Ascending aorta (tissue), 2 donors: ENCODE measurements at regions of chr11 and their contacts with region 1.

Region 1: DNA sequence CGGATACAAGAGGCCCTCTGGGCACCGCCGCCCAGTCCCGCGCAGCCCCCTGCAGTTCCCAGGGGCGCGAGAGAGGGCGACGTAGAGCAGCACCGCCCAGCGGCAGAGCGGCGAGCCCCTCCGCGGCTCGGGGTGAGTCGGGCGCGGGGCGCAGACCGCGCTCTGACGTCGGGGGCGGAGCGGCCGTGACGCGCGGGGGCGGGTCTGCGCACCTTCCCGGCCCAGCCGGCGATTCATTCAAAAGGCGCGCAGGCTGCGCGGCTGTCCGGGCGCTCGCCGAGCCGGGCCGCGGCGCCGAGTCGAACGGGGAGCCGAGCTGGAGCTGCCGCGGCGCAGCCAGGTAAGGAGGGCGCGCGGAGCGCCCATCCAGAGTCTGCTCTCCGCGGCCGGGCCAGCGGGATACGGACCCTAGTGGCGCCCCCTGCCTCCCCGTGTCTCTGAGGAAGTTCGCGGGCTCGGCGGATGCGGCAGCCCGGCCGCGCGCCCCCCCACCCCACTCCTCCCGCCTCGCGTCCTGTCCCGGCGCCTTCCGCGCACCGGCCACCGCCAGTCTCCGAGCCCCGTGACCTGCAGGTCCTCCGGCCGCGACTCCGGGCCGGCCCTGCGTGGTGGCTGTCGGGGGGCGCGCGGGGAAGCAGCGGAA is at the start of gene RELT:
- DNase-seq: peak; percentile 50 to 93
- H3K4me3 ChIP-seq: peak within 1 kb of the TSS; percentile 73 to 79
- H3K27ac ChIP-seq: peak within 1 kb of the TSS; percentile 88 to 92
- H3K4me1 ChIP-seq: peaks cover 0 to 8% of the 10 kb centered on the region in 2 donors
- H3K27me3 ChIP-seq: no peaks in the 10 kb centered on the region
- CTCF ChIP-seq: peak; percentile 86 to 94 (median 89)
- total RNA-seq, gene RELT: 25.7 TPM

Region 2: DNA sequence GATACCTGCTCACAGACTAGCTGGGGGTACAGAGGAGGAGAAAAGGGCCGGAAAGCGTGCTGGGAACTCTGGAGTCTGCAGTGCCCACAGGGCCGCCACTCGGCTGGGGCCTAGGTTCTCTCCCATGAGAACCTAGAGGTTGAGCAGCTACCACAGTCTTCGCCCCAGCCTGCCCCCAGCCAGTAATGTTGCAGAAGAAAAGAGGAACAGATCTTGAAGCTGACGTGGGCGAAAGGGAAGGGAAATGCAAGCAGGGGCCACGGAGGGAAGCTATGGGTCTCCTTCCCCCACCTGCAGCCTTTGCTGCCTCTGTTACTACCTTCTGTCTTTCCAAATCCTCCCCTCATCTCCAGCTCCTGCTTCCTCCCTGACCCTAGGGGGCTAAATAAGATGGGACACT is 187.0 kb before region 1 on chr11:
- intact Hi-C with region 1: no loop called
- DNase-seq: peak in 1 of 2 donors; percentile 72
- H3K4me3 ChIP-seq: no peak overlapping the region
- H3K27ac ChIP-seq: no peak overlapping the region
- H3K4me1 ChIP-seq: peaks cover 16 to 18% of the 10 kb centered on the region in 2 donors
- H3K27me3 ChIP-seq: no peaks in the 10 kb centered on the region
- CTCF ChIP-seq: no peak

Region 3: DNA sequence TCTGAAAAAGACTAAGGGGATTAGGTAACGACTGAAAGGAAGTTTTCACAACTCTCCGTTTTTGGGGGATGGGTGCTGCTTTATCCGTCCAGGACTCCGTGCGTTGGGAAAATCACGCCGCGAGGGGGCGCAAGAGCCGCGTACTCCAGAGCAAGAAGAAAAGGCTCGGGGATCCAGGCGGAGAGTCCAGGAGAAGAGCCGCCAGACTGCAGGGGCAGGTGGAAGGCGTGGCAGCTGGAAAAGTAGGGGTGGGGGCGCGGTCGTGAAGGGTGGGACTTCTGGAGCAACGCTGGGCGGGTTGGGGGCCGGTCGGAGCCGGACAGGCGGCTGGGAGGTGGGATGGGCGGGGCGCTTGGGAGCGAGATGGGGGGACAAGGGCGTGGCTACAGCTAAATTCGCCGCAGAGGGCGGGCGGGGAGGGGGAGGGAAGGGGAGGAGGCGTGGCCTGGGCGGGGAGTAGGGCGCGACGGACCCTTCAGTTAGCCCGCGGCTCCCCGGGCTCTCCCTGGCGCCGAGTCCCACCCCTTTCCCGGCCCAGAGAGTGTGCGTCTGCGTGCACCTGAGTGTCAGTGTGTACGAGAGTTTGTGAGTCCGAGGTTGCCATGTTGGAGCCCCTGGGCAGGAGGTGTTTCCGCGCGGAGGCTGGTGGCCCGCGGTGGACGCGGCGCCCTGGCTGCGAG is 68.8 kb before region 1 on chr11:
- intact Hi-C with region 1: loop called (anchors 1 kb)
- DNase-seq: peak; percentile 87 to 100
- H3K4me3 ChIP-seq: peak overlapping the region; percentile 71 to 75
- H3K27ac ChIP-seq: peak overlapping the region; percentile 94 to 96
- H3K4me1 ChIP-seq: peaks cover 0 to 2% of the 10 kb centered on the region in 2 donors
- H3K27me3 ChIP-seq: no peaks in the 10 kb centered on the region
- CTCF ChIP-seq: peak; percentile 80 to 96 (median 92)

Region 4: DNA sequence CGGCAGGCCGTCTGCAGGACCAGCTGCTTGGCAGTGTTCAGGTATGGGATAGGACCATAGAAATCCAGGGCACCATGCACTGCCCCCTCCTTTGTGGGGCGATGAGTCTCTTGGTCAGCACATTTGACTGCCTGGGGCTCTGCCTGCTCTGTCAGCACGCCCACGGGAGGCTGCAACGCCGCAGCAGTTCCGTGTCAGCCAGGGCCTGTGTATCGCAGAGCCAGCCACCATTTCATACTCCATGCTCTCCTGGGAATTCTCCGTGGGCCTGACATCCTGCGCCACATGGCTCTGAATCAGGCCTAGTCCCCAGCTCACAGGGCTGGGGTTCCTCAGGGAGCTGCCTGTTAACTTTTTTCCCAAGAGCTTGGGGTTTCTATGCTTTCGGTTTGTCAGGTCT is 17.0 kb before region 1 on chr11:
- intact Hi-C with region 1: loop called (anchors 1 kb)
- DNase-seq: peak in 1 of 2 donors; percentile 90
- H3K4me3 ChIP-seq: no peak overlapping the region
- H3K27ac ChIP-seq: peak overlapping the region; percentile 83 to 84
- H3K4me1 ChIP-seq: peaks cover 18 to 35% of the 10 kb centered on the region in 2 donors
- H3K27me3 ChIP-seq: no peaks in the 10 kb centered on the region
- CTCF ChIP-seq: no peak

Region 5: DNA sequence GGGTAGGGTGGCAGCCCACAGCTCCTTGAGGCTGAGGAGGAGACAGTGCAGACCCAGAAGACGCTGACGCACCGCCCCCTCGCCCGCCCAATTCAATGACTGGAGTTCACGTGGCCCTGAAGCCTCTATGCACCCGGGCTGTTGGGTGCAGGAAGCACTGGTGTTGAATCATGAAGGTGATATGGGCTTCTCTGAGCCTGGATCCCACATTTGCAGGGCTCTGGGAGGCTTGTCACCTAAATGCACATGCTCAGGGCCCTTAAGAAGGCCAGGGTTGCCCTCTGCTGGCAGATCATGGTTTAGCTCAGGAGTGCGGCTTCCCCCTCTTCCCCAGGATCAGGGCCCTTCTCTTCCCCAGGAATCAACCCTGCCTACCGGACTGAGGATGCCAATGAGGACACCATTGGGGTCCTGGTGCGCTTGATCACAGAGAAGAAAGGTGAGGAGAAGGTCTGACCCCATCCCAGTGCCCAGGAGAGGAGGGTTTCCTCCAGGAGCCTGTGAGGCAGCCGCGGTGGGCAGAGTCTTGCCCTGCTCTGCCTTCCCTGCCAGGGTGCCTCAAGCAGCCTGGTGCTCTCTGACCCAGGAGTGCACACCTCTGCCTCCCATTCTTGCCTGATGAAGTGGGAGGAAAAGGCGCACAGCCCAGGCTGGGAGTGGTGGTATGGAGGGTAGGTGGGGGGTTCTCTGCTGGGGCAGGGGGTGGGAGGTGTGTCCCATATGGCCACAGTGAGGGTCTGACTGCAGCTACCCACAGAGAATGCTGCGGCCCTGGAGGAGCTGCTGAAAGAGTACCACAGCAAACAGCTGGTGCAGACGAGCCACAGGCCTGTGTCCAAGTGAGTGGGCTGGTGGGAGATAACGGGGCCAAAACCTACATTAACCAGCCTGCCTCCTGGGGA is 17.4 kb after region 1 on chr11:
- intact Hi-C with region 1: loop called (anchors 2 kb)
- DNase-seq: peak in 1 of 2 donors; percentile 88
- H3K4me3 ChIP-seq: no peak overlapping the region
- H3K27ac ChIP-seq: no peak overlapping the region
- H3K4me1 ChIP-seq: no peaks in the 10 kb centered on the region
- H3K27me3 ChIP-seq: no peaks in the 10 kb centered on the region
- CTCF ChIP-seq: peak; percentile 76 to 83 (median 78)

Region 6: DNA sequence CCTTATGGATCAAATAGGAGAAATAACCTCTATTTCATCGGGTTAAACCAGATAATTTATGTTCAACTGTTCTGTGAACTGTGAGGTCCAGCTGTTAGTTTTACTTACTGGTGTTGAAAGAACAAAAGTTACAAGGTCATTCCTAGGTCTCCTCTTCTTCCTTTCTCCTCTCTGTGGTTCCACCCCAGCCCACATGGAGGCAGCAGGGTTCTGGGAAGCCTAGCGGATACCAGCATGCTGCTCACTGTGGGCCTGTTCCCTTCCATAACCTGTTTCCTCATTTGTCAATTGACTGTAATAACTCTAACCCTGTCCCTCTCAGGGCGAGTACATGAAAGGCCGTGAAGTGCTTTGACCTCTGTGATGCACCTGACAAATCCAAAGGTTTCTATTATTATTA is 27.8 kb after region 1 on chr11:
- intact Hi-C with region 1: no loop called
- DNase-seq: peak in 1 of 2 donors; percentile 79
- H3K4me3 ChIP-seq: no peak overlapping the region
- H3K27ac ChIP-seq: no peak overlapping the region
- H3K4me1 ChIP-seq: peaks cover 0 to 4% of the 10 kb centered on the region in 2 donors
- H3K27me3 ChIP-seq: no peaks in the 10 kb centered on the region
- CTCF ChIP-seq: peak; percentile 32 to 60 (median 51)